HCT116 (cell line): ENCODE measurements at regions of chr16 and their contacts with region 1.

Region 1: GRCh38 chr16:31094424-31095120 is at the start of gene VKORC1:
- DNase-seq: peak; percentile 97
- ATAC-seq: peak; percentile 92
- H3K4me3 ChIP-seq: peak within 1 kb of the TSS; percentile 88 to 98
- H3K27ac ChIP-seq: peak within 1 kb of the TSS; percentile 85
- H3K4me1 ChIP-seq: peaks cover 13 to 27% of the 10 kb centered on the region in 2 experiments
- H3K27me3 ChIP-seq: no peaks in the 10 kb centered on the region
- CTCF ChIP-seq: no peak
- POLR2A ChIP-seq: peak; percentile 58
- RAD21 ChIP-seq: no peak
- total RNA-seq, gene VKORC1: 83.8 TPM

Region 2: DNA sequence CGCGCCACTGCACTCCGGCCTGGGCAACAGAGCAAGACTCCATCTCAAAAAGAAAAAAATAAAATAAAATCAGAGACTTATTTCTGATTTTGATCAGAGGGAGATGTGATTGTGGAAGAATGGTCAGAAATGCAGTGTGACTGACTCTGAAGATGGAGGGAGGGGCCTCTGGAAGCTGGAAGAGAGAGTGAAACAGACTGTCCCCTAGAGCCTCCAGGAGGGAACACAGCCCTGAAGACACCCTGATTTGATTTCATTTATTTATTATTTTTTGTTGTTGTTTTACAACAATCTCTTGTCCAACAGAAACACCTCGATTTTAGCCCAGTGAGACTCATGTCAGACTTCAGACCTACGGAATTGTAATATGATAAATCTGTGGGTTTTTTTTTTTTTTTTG is 226.8 kb before region 1 on chr16:
- CTCF ChIA-PET with region 1: no interaction called
- POLR2A ChIA-PET with region 1: no interaction called
- RAD21 ChIA-PET with region 1: no interaction called
- intact Hi-C with region 1: no loop called
- DNase-seq: no peak
- ATAC-seq: peak; percentile 97
- H3K4me3 ChIP-seq: no peak overlapping the region
- H3K27ac ChIP-seq: no peak overlapping the region
- H3K4me1 ChIP-seq: no peaks in the 10 kb centered on the region
- H3K27me3 ChIP-seq: no peaks in the 10 kb centered on the region
- CTCF ChIP-seq: peak; percentile 7 to 31 (median 29); a peak in 3 of 6 replicates
- POLR2A ChIP-seq: no peak
- RAD21 ChIP-seq: peak; percentile 35; the same call in 1 of the 2 replicates

Region 3: DNA sequence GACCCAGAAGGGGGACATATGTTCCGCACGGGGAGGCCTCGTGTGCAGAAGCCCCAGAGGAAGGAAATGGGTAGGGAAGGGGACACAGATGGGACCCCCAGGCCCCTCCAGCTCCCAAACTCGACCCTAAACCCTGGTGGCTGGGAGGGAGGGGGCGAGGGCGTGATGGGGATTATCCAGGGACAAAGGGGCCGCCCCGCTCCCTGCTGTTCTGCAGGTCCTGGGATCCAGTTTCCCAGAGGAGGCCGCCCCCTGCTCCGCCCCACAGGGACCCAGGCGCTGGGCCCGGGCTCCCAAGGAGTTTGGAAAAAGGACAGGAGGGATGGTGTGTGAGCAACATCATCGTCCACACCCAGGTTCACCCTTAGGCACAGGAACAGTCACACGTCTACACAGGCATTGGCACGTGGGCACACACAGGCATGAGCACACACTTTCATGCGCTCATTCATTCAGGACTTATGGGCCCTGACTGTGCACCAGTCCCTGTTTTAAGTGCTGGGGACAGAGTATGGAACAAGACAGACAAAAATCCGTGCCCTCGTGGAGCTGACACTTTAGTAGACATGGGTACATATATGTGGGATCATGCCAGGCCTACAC is 184.0 kb before region 1 on chr16:
- CTCF ChIA-PET with region 1: no interaction called
- POLR2A ChIA-PET with region 1: no interaction called
- RAD21 ChIA-PET with region 1: no interaction called
- intact Hi-C with region 1: no loop called
- DNase-seq: no peak
- ATAC-seq: no peak
- H3K4me3 ChIP-seq: no peak overlapping the region
- H3K27ac ChIP-seq: no peak overlapping the region
- H3K4me1 ChIP-seq: no peaks in the 10 kb centered on the region
- H3K27me3 ChIP-seq: no peaks in the 10 kb centered on the region
- CTCF ChIP-seq: no peak
- POLR2A ChIP-seq: no peak
- RAD21 ChIP-seq: no peak

Region 4: GRCh38 chr16:30957456-30958174 is 137.0 kb before region 1 on chr16 and contains the start of gene SETD1A:
- CTCF ChIA-PET with region 1: interaction called, 4 read pairs
- POLR2A ChIA-PET with region 1: no interaction called
- RAD21 ChIA-PET with region 1: no interaction called
- intact Hi-C with region 1: loop called (anchors 10 kb)
- DNase-seq: peak; percentile 90
- ATAC-seq: peak; percentile 79
- H3K4me3 ChIP-seq: peak within 1 kb of the TSS; percentile 74 to 88
- H3K27ac ChIP-seq: peak within 1 kb of the TSS; percentile 100
- H3K4me1 ChIP-seq: peaks cover 22 to 32% of the 10 kb centered on the region in 2 experiments
- H3K27me3 ChIP-seq: no peaks in the 10 kb centered on the region
- CTCF ChIP-seq: no peak
- POLR2A ChIP-seq: no peak
- RAD21 ChIP-seq: no peak
- total RNA-seq, gene SETD1A: 26.9 TPM

Region 5: GRCh38 chr16:30997000-30997886 is 97.3 kb before region 1 on chr16:
- CTCF ChIA-PET with region 1: no interaction called
- POLR2A ChIA-PET with region 1: no interaction called
- RAD21 ChIA-PET with region 1: interaction called in 1 of 2 experiments, 3 read pairs
- intact Hi-C with region 1: loop called (anchors 5 kb)
- DNase-seq: peak; percentile 43
- ATAC-seq: peak; percentile 89
- H3K4me3 ChIP-seq: peak overlapping the region; percentile 72 to 83
- H3K27ac ChIP-seq: peak overlapping the region; percentile 72
- H3K4me1 ChIP-seq: peaks cover 22 to 44% of the 10 kb centered on the region in 2 experiments
- H3K27me3 ChIP-seq: no peaks in the 10 kb centered on the region
- CTCF ChIP-seq: no peak
- POLR2A ChIP-seq: no peak
- RAD21 ChIP-seq: no peak

Region 6: GRCh38 chr16:31022544-31023251 is 71.9 kb before region 1 on chr16:
- CTCF ChIA-PET with region 1: no interaction called
- POLR2A ChIA-PET with region 1: no interaction called
- RAD21 ChIA-PET with region 1: no interaction called
- intact Hi-C with region 1: no loop called
- DNase-seq: no peak
- ATAC-seq: no peak
- H3K4me3 ChIP-seq: no peak overlapping the region
- H3K27ac ChIP-seq: no peak overlapping the region
- H3K4me1 ChIP-seq: peaks cover 5 to 7% of the 10 kb centered on the region in 2 experiments; a peak in 1 of 4 replicates
- H3K27me3 ChIP-seq: no peaks in the 10 kb centered on the region
- CTCF ChIP-seq: no peak
- POLR2A ChIP-seq: no peak
- RAD21 ChIP-seq: no peak

Region 7: GRCh38 chr16:31073968-31074813 is 20.4 kb before region 1 on chr16 and contains the starts of genes ZNF646 and ZNF668:
- CTCF ChIA-PET with region 1: interaction called, 3 read pairs
- POLR2A ChIA-PET with region 1: interaction called, 8 read pairs
- RAD21 ChIA-PET with region 1: no interaction called
- intact Hi-C with region 1: loop called (anchors 1 kb)
- DNase-seq: peak; percentile 99
- ATAC-seq: peak; percentile 86
- H3K4me3 ChIP-seq: peak within 1 kb of the TSS; percentile 87 to 99
- H3K27ac ChIP-seq: peak within 1 kb of the TSS; percentile 100
- H3K4me1 ChIP-seq: peaks cover 8 to 18% of the 10 kb centered on the region in 2 experiments; a peak in 3 of 4 replicates
- H3K27me3 ChIP-seq: no peaks in the 10 kb centered on the region
- CTCF ChIP-seq: no peak
- POLR2A ChIP-seq: peak; percentile 61
- RAD21 ChIP-seq: no peak
- total RNA-seq, gene ZNF646: 17.7 TPM
- total RNA-seq, gene ZNF668: 16.8 TPM

Region 8: DNA sequence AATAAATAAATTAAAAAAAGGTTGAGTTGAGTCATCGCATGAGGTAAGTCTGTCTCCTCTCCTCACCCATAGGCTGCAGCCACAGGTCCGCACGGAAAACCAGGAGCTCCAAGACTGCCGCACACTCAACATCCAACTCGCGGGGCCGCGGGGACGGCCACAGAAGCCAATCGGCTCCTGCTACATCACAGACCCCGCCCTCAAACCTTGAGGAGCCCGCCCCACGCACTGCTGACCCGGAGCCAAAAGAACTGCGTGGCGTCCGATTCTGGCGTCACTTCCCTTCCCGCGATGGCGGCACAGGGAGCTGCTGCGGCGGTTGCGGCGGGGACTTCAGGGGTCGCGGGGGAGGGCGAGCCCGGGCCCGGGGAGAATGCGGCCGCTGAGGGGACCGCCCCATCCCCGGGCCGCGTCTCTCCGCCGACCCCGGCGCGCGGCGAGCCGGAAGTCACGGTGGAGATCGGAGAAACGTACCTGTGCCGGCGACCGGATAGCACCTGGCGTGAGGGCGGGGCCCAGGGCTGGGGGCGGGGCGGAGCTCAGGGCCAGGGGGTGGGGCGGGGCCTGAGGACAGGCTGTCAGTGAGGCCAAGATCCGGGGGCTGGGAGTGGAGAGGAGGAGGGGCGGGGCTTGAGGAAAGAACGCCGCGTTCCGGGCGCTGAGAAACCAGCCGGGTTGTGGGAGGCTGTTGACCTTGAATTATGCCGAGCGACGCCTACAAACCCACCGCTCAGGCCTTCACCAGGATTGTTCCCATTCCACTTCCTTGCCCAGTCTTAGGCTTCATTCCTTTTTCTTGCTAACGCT is 23.0 kb after region 1 on chr16 and contains the start of gene KAT8:
- CTCF ChIA-PET with region 1: interaction called, 7 read pairs
- POLR2A ChIA-PET with region 1: interaction called, 17 read pairs
- RAD21 ChIA-PET with region 1: interaction called in 1 of 2 experiments, 3 read pairs
- intact Hi-C with region 1: no loop called
- DNase-seq: peak; percentile 97
- ATAC-seq: peak; percentile 92
- H3K4me3 ChIP-seq: peak within 1 kb of the TSS; percentile 70 to 82
- H3K27ac ChIP-seq: peak within 1 kb of the TSS; percentile 80
- H3K4me1 ChIP-seq: peaks cover 7 to 30% of the 10 kb centered on the region in 2 experiments; a peak in 3 of 4 replicates
- H3K27me3 ChIP-seq: no peaks in the 10 kb centered on the region
- CTCF ChIP-seq: no peak
- POLR2A ChIP-seq: peak; percentile 56
- RAD21 ChIP-seq: no peak
- total RNA-seq, gene KAT8: 44.9 TPM